Cardiac septum (tissue), 1 donor: ENCODE measurements at regions of chr9 and their contacts with region 1.

Region 1: DNA sequence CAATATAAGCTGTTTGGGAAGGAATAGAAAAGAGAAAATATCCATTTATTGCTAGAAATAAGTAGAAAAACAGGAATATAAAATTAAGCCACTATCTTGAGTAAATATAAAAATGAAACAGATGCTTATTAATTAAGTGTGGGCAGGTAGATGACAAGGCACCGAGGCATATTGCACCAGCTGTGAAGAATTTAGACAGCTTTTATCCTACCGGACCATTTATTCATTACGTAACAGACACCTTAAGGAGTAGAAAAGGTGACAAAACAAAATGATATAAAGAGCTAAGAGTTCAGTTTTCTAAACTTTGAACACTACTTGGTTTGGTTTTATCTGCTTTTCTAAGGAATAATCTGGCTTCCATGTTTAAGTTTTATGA is 404.1 kb downstream of the PTPRD start:
- DNase-seq: no peak

Region 2: DNA sequence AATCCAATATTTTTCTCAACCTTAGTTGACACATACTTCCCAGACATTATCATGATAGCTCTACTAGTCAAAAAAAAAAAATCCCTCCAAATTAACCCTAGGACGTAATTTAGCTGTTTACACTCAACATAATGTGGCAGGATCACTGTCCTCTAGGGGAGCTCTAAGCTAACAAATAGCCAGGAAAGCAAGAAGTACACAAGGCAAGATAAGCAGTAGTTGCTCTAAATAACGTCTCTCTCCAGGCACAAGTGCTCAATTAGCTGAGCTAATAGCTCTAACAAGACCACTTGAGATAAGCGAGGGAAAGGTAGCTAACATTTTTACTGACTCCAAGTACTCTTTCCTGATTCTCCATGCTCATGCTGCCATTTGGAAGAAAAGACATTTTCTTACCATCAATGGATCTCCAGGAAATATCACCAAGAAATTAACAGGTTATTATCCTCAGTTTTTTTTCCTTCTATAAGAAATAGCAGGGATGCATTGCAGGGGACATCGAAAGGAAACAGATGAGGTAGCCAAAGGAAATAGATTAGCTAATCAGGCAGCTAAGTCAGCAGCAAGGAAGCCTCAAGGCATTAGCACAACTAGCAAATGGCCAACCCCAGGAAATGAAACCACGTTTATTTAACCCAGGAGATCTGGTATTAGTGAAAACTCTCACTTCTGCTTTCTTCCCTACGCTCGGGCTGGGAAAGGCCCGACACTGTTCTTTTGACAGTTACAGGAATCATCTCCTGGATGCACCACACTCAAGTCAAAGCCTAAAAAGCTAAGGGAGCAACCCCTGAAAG is 210.0 kb before region 1 on chr9:
- intact Hi-C with region 1: no loop called
- DNase-seq: no peak

Region 3: DNA sequence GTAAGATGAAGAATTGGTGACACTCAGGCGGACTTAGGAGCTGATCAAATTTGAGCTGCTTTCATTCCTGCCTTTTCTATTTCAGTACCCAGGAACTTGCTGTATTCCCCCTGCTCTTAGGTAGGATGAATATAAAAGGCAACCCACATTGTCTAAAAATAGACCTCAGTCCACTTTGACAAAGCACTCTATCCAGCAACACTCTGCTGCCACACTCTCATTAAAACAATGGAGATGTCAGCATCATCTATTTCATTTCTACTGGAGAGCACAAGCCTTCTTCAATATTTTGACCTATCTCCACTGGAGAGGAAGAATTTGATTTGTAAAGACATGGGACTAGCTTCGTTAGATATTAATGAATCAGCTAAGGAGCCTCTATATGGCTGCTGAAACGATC is 64.3 kb before region 1 on chr9:
- intact Hi-C with region 1: loop called (anchors 10 kb)
- DNase-seq: no peak

Region 4: DNA sequence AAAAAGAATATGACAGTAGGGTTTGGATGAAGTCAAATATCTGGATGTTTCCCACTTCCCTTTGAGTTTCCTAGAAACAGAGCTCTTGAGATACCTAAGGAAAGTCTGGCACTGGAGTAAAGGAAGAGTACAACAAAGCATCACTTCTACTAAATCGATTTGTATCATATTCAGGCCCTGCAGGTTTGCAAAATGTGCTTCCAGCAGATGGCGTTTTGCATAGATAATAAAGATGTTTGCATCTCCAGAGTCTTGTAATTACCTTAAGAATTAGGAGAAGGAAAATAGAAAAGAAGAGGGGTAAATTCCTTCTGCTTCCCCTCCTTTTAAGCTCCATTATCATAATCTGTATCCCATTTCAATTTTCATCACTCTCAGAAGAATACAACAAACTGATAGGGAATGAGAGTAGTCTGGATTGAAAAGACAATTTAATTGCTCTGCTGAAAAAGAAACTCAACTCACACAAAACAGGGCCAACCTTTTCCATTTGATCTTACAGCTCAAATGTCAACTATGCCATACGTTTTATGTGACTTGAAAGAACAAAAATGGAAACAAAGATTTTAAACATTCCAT is 23.8 kb after region 1 on chr9:
- intact Hi-C with region 1: no loop called
- DNase-seq: no peak